Caco-2 (cell line): ENCODE measurements at regions of chr15 and their contacts with region 1.

Region 1: DNA sequence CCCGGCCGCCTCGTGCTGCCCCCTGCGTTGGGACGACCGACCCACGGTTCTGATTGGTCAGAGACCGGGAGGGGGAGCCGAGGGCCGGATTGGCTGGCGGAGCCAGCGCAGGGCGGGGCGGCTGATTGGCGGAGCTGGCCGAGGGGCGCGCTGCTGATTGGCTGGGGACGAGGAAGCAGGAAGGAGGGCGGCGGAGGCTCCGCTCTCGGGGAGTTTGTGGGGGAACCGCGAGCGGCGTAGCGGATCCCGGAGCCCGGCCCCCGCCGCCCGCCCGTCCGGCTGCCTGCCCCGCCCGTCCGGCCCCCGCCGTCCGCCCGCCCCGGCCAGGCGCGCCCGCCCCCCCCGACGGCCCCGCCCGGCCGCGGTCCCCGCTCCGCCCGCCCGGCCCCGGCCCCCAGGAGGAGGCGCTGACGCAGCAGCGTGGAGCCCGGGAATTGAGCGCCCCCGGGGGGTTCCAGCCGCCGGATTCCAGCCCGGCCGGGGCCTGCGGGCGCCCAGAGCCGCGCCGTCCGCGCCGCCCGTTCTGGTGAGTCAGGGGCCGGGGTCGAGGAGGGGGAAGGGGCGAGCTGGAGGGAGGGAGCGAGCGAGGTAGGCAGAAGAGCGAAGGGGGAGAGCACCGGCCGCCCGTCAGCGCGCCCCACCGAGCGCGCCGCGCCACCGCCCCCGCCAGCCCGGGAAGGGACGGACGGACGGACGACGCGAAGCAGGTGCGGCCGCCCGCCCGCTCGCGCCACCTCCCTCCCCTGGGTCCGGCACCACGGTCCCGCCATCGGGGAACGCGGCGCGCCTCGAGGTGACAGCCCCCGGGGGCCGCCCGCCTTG is at the start of gene BAHD1:
- DNase-seq: peak; percentile 97 to 98
- H3K4me3 ChIP-seq: peak within 1 kb of the TSS; percentile 67
- H3K4me3 Mint-ChIP-seq: peak within 1 kb of the TSS; percentile 94
- H3K27ac Mint-ChIP-seq: peak within 1 kb of the TSS; percentile 75
- H3K4me1 ChIP-seq: peaks cover 23% of the 10 kb centered on the region
- H3K4me1 Mint-ChIP-seq: peaks cover 24% of the 10 kb centered on the region
- H3K27me3 ChIP-seq: no peaks in the 10 kb centered on the region
- H3K27me3 Mint-ChIP-seq: no peaks in the 10 kb centered on the region
- CTCF ChIP-seq: peak in 1 of 2 experiments; percentile 20
- total RNA-seq, gene BAHD1: 25.9 and 28.1 TPM in 2 replicates

Region 2: DNA sequence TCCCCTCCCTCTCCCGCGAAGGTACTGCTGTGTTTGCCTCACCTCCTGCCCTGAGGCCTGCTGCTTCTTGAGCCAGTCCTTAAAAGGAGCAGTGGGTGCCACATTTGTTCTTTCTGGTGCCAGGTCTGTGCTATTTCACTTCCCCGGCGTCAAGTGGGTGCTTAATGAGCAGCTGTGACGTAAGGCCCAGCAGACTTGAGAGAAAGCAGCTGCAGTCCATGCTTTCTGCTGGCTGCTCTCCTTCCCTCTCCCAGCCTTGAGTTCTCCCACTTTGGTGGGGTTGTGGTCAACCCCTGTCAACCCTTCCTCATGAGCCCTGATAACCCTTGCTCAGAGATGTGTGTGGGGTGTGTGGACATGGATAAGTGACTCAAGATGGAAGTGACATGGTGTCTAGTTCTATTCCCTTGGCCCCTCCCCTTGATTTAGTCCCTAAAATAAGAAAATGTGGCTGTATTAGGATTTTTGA is 110.6 kb before region 1 on chr15:
- CTCF ChIA-PET with region 1: no interaction called
- POLR2A ChIA-PET with region 1: no interaction called
- intact Hi-C with region 1: no loop called
- DNase-seq: no peak
- H3K4me3 ChIP-seq: no peak overlapping the region
- H3K4me3 Mint-ChIP-seq: no peak overlapping the region
- H3K27ac Mint-ChIP-seq: no peak overlapping the region
- H3K4me1 ChIP-seq: peaks cover 20% of the 10 kb centered on the region
- H3K4me1 Mint-ChIP-seq: peaks cover 23% of the 10 kb centered on the region
- H3K27me3 ChIP-seq: no peaks in the 10 kb centered on the region
- H3K27me3 Mint-ChIP-seq: no peaks in the 10 kb centered on the region
- CTCF ChIP-seq: no peak

Region 3: DNA sequence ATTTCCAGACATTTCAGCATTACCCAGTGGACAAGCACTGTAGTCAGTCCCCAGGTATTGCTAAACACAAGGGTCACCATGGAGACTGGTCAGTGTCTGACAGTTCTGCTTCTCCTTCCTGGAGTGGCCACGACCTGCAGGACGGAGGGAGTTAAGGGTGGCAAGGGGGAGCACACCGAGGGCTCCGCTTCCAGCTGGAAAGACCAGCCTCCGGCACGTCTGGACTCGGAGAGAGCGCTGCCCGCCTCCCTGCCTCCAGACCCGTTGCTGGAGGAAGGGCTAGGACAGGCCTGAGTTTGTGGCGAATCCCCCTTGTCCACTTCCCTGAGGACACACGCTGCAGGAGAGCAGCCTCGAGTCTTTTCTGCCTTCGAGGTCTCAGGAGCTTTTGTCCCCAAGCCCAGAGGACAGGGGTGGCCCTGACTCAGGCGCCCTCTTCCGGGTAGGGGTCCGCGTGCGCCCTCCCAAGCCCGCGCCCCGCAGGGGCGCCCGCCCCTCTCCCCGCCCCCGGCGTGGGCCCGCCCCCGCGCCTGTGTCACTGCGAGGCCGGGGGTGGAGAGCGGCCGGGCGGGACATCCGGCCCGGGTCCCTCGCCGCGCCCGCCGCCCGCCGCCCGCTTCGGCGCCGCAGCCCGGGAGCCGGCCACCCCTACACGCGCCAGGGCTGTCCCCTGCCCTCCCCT is 29.6 kb after region 1 on chr15 and contains the start of gene CHST14:
- CTCF ChIA-PET with region 1: interaction called, 8 read pairs
- POLR2A ChIA-PET with region 1: no interaction called
- intact Hi-C with region 1: loop called (anchors 1 kb)
- DNase-seq: peak; percentile 71 to 81
- H3K4me3 ChIP-seq: peak within 1 kb of the TSS; percentile 74
- H3K4me3 Mint-ChIP-seq: peak within 1 kb of the TSS; percentile 80
- H3K27ac Mint-ChIP-seq: peak within 1 kb of the TSS; percentile 88
- H3K4me1 ChIP-seq: peaks cover 10% of the 10 kb centered on the region
- H3K4me1 Mint-ChIP-seq: peaks cover 8% of the 10 kb centered on the region
- H3K27me3 ChIP-seq: no peaks in the 10 kb centered on the region
- H3K27me3 Mint-ChIP-seq: no peaks in the 10 kb centered on the region
- CTCF ChIP-seq: peak in 1 of 2 experiments; percentile 17
- total RNA-seq, gene CHST14: 17.0 and 19.6 TPM in 2 replicates

Region 4: DNA sequence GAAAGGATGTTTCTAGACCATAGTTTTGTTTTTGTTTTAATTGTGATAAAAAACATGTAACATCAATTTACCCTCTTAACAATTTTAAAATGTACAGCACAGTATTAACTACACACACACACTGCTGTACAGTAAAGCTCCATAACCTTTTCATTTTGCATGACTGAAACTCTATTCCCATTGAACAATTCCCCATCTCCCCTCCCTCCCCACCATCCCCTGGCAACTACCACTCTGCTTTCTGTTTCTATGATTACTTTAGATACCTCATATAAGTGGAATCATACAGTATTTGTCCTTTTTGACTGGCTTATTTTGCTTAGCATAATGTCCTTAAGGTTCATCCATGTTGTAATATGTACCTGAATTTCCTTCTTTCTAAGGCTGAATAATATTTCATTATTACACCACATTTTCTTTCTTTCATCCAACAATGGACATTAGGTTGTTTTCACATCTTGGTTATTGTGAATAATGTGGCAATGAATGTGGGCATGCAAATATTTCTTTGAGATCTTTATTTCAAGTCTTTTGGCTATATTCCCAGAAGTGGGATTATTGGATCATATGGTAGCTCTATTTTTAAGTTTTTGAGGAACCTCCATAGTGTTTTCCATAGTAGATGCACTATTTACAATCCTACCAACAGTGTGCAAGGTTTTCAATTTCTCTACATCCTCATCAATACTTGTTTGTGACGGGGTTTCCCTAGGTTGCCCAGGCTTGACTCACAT is 40.6 kb after region 1 on chr15:
- CTCF ChIA-PET with region 1: no interaction called
- POLR2A ChIA-PET with region 1: no interaction called
- intact Hi-C with region 1: no loop called
- DNase-seq: no peak
- H3K4me3 ChIP-seq: no peak overlapping the region
- H3K4me3 Mint-ChIP-seq: no peak overlapping the region
- H3K27ac Mint-ChIP-seq: no peak overlapping the region
- H3K4me1 ChIP-seq: no peaks in the 10 kb centered on the region
- H3K4me1 Mint-ChIP-seq: no peaks in the 10 kb centered on the region
- H3K27me3 ChIP-seq: no peaks in the 10 kb centered on the region
- H3K27me3 Mint-ChIP-seq: peaks cover 4% of the 10 kb centered on the region
- CTCF ChIP-seq: no peak